Activated CD4-positive, alpha-beta T cell treated with anti-CD3 and anti-CD28 coated beads, Interleukin-2, amount 10 ng/mL, durations not matched to agents 24 days and 14 days (primary cell): ENCODE measurements at regions of chr12 and their contacts with region 1.

Region 1: GRCh38 chr12:49264738-49265515 is at the start of gene TUBA1C:
- DNase-seq: peak; percentile 98
- H3K4me3 Mint-ChIP-seq: peak within 1 kb of the TSS; percentile 97
- H3K27ac Mint-ChIP-seq: peak within 1 kb of the TSS; percentile 100
- H3K4me1 Mint-ChIP-seq: peaks cover 43% of the 10 kb centered on the region
- H3K27me3 Mint-ChIP-seq: no peaks in the 10 kb centered on the region
- total RNA-seq, gene TUBA1C: 286 and 305 TPM in 2 replicates

Region 2: DNA sequence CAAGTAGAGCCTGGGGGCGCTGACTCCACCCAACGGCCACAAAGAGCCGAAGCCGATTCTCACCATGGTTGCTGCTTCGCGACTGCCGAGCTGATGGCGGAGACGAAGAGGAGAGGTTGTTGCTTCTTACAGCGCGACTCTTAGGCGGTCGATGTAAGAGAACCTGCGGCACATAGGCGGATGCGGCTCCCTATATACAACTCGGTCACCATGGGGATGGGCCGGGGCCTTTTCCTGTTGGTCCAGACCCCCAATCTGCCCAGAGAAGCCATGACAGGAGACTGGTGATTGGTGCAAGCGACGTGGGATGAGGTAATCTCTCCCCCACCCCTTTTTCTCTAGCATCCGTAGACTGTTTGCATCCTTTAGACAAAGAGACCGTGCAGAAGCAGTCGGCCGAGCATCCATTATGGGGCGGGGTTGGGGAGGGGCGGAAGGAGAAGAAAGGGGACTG is 76.0 kb before region 1 on chr12 and contains the start of gene TUBA1A:
- intact Hi-C with region 1: loop called (anchors 2 kb)
- DNase-seq: peak; percentile 98
- H3K4me3 Mint-ChIP-seq: peak within 1 kb of the TSS; percentile 93
- H3K27ac Mint-ChIP-seq: peak within 1 kb of the TSS; percentile 99
- H3K4me1 Mint-ChIP-seq: peaks cover 11% of the 10 kb centered on the region
- H3K27me3 Mint-ChIP-seq: peaks cover 9% of the 10 kb centered on the region
- total RNA-seq, gene TUBA1A: 45.9 and 46.8 TPM in 2 replicates

Region 3: DNA sequence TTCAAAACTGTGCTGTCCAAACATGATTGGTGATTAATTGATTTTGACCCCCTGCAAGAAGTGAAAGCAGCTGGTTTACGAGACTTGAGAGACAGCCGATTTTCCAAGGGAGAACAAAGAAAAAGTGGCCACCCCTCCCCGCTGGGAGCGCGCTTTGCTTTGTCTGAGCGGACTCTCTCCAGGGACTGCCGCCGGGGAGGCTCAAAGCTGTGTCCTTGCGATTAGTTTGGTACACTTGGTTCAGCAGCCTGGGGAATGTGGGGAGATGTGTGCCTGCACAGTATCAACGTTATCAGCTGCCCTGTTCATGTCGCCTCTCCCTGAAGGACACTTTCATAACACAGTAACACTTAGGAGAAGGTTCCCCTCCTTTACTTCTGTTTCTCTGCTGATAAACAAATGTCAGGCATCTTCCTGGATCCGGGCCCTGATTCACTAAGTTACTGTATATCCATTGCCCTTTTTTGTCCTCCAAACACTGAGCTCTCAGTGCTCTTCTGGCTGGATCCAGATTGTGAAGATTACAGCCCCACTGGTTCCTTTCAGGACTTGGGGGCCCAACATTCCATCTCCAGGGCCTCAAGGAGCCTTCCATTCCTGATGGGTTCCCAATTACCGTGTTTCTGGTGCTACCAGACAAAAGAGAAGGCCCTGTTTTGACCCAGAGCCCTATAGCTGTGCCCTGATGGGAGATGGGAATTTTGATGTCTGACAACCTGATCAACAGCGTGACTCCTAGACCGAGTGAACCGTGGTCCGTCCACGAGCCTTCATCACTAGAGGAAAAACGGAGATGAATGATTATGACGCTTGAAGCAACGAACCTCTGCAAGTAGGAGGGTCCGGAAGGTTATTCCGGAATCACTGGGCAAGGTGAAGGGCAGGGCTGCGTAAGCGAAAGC is 31.7 kb before region 1 on chr12:
- intact Hi-C with region 1: loop called (anchors 2 kb)
- DNase-seq: no peak
- H3K4me3 Mint-ChIP-seq: peak overlapping the region; percentile 88
- H3K27ac Mint-ChIP-seq: peak overlapping the region; percentile 77
- H3K4me1 Mint-ChIP-seq: peaks cover 14% of the 10 kb centered on the region
- H3K27me3 Mint-ChIP-seq: peaks cover 1% of the 10 kb centered on the region

Region 4: DNA sequence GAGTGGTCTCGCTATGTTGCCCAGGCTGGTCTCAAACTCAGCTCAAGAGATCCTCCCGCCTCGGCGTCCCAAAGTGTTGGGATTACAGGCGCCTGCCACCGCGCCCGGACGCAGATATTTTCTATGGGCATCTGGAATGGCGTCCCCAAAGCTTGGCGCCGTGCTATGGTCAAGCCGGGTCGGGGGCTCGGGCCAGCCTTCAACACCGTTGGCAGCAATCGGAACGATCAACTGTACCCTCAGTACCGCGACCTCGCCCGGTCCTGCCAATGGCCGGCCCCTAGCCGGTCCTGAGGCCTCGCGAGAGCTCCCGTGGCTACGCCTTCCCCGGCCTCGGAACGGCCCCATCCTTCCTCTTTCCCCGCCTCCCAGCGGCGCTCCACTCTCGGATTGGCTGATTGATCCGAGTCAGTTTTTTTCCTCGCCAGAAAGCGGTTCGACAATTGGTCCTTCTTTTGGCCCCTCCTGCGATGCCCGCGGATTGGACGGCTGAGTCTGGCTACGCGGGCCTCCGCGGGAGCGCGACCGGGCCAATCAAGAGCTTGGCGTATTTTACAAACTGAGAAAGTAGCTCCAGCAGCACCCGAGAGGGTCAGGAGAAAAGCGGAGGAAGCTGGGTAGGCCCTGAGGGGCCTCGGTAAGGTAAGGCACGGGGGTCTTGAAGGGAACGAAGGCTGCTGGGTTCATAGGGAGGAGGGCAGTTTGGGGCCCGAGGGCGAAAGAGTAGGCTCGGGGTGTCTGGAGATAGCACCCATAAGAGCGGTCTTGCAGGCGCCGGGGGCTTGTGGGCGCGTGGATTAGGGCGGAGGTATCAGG is 58.0 kb after region 1 on chr12 and contains the start of gene TROAP:
- intact Hi-C with region 1: loop called (anchors 1 kb)
- DNase-seq: peak; percentile 99
- H3K4me3 Mint-ChIP-seq: peak within 1 kb of the TSS; percentile 94
- H3K27ac Mint-ChIP-seq: peak within 1 kb of the TSS; percentile 88
- H3K4me1 Mint-ChIP-seq: peaks cover 24% of the 10 kb centered on the region
- H3K27me3 Mint-ChIP-seq: no peaks in the 10 kb centered on the region
- total RNA-seq, gene TROAP: 49.9 and 51.6 TPM in 2 replicates

Region 5: DNA sequence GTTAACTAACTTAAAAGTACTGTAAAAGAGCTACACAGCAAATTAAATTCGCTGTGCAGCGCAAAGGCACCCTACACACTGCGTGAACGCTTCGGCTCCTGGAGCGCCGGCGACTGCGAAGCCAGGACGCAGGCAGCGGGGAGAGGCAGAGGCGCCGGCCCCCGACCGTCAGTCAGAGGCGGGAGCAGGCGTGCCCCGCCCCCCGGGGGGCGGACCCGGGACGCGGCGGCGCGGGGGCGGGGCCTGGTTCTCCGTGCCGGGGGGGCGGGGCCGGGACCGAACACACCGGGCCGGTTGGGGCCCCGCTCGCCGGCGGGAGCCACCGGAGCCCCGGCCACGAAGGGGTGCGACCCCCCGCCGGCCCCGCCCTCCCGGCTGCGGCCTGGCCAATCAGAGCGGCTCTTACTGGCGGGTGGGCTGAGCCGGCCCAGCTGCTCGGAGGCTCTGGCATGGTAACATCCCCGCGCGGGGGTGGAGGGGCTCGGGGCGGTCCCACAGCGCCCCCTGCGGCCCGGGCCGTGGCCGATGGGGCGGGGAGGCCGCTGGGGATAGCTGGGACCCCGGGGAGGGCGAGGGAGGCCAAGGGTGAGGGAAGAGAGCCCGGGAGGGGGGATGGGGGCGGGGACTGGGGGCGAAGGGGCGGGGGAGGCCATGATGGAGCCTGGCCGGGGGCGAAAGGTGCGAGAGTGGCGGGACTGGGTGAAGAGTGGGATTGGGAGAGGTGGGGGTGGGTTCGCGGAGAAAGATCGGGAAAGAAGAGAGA is 358.4 kb after region 1 on chr12 and contains the start of gene PRPF40B:
- intact Hi-C with region 1: loop called (anchors 1 kb)
- DNase-seq: peak; percentile 95
- H3K4me3 Mint-ChIP-seq: peak within 1 kb of the TSS; percentile 83
- H3K27ac Mint-ChIP-seq: peak within 1 kb of the TSS; percentile 84
- H3K4me1 Mint-ChIP-seq: peaks cover 24% of the 10 kb centered on the region
- H3K27me3 Mint-ChIP-seq: peaks cover 30% of the 10 kb centered on the region
- total RNA-seq, gene PRPF40B: 12.3 and 12.7 TPM in 2 replicates

Region 6: GRCh38 chr12:49740930-49741881 is 476.3 kb after region 1 on chr12 and contains the start of gene TMBIM6:
- intact Hi-C with region 1: loop called (anchors 2 kb)
- DNase-seq: peak; percentile 100
- H3K4me3 Mint-ChIP-seq: peak within 1 kb of the TSS; percentile 90
- H3K27ac Mint-ChIP-seq: peak within 1 kb of the TSS; percentile 95
- H3K4me1 Mint-ChIP-seq: peaks cover 31% of the 10 kb centered on the region
- H3K27me3 Mint-ChIP-seq: peaks cover 5% of the 10 kb centered on the region
- total RNA-seq, gene TMBIM6: 370 and 372 TPM in 2 replicates